Testis (tissue), 5 donors: ENCODE measurements at regions of chr10 and their contacts with region 1.

Region 1: DNA sequence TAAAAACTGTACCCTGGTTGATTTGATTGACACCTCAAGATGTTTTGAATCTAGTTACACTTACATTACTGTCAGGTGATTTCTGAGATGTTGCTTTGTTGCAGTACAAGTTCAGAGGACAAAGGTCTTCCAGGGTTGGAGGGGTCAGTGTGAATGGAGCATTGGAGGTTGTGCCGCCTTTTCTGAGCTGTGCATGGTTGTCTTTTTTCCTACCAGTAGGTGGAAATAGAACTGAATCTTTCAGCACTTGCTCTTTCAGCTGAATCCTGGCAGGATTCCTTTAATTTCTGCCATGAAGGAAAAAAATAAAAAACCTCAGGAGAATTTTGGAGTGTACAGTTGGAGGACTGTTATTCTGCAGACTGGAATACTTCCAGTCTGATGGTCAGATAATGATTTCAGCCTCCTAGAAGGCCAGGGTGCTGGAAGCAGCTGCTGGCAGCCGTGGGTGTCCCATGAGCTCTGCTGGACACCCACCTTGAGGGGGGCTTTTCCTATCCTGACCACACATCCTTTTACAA is 82.7 kb downstream of the PLCE1 start:
- DNase-seq: no peak
- H3K4me3 ChIP-seq: no peak overlapping the region
- H3K27ac ChIP-seq: no peak overlapping the region
- H3K4me1 ChIP-seq: peaks cover 5% of the 10 kb centered on the region
- H3K27me3 ChIP-seq: no peaks in the 10 kb centered on the region
- CTCF ChIP-seq: peak; percentile 47 to 77 (median 51)
- POLR2A ChIP-seq: no peak

Region 2: DNA sequence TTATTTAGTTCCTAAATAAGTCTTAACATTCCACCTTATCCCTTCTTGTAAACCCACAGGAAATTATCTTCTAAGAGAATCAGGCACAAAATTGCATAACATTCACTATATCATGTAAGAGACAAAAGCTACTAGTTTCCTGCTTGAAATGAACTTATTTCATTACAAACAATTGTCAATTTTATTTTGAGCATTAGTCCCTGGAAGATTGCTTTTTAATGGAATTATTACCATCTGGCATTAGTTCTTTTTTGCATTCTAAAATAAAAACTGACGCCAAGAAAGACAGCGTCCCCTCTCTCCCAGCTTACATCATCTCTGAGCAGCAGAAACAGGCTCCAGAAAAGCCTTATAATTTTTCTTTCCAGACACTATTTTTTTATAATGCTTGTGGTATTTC is 164.5 kb after region 1 on chr10:
- intact Hi-C with region 1: loop called (anchors 5 kb)
- DNase-seq: no peak
- H3K4me3 ChIP-seq: no peak overlapping the region
- H3K27ac ChIP-seq: no peak overlapping the region
- H3K4me1 ChIP-seq: no peaks in the 10 kb centered on the region
- H3K27me3 ChIP-seq: no peaks in the 10 kb centered on the region
- CTCF ChIP-seq: no peak
- POLR2A ChIP-seq: no peak